Activated CD4-positive, alpha-beta memory T cell treated with anti-CD3 and anti-CD28 coated beads for 36 hours (primary cell): ENCODE measurements at regions of chr6 and their contacts with region 1.

Region 1: GRCh38 chr6:14423330-14423729 is 305.8 kb downstream of the CD83 start:
- DNase-seq: no peak
- H3K4me3 Mint-ChIP-seq: no peak overlapping the region
- H3K27ac Mint-ChIP-seq: peak overlapping the region; percentile 73
- H3K4me1 Mint-ChIP-seq: peaks cover 46% of the 10 kb centered on the region
- H3K27me3 Mint-ChIP-seq: no peaks in the 10 kb centered on the region

Region 2: GRCh38 chr6:14270925-14271791 is 152.2 kb before region 1 on chr6:
- CTCF ChIA-PET with region 1: no interaction called
- POLR2A ChIA-PET with region 1: no interaction called
- intact Hi-C with region 1: loop called (anchors 1 kb)
- DNase-seq: peak; percentile 85
- H3K4me3 Mint-ChIP-seq: no peak overlapping the region
- H3K27ac Mint-ChIP-seq: peak overlapping the region; percentile 57
- H3K4me1 Mint-ChIP-seq: peaks cover 35% of the 10 kb centered on the region
- H3K27me3 Mint-ChIP-seq: no peaks in the 10 kb centered on the region

Region 3: GRCh38 chr6:14542670-14543366 is 119.5 kb after region 1 on chr6:
- CTCF ChIA-PET with region 1: no interaction called
- POLR2A ChIA-PET with region 1: no interaction called
- intact Hi-C with region 1: loop called (anchors 1 kb)
- DNase-seq: peak; percentile 90
- H3K4me3 Mint-ChIP-seq: no peak overlapping the region
- H3K27ac Mint-ChIP-seq: peak overlapping the region; percentile 53
- H3K4me1 Mint-ChIP-seq: peaks cover 31% of the 10 kb centered on the region
- H3K27me3 Mint-ChIP-seq: peaks cover 2% of the 10 kb centered on the region

Region 4: GRCh38 chr6:14665827-14666724 is 242.7 kb after region 1 on chr6:
- CTCF ChIA-PET with region 1: no interaction called
- POLR2A ChIA-PET with region 1: no interaction called
- intact Hi-C with region 1: loop called (anchors 1 kb)
- DNase-seq: peak; percentile 84
- H3K4me3 Mint-ChIP-seq: no peak overlapping the region
- H3K27ac Mint-ChIP-seq: peak overlapping the region; percentile 11
- H3K4me1 Mint-ChIP-seq: peaks cover 25% of the 10 kb centered on the region
- H3K27me3 Mint-ChIP-seq: no peaks in the 10 kb centered on the region

Region 5: GRCh38 chr6:14831937-14832336 is 408.6 kb after region 1 on chr6:
- CTCF ChIA-PET with region 1: no interaction called
- POLR2A ChIA-PET with region 1: no interaction called
- intact Hi-C with region 1: no loop called
- DNase-seq: no peak
- H3K4me3 Mint-ChIP-seq: no peak overlapping the region
- H3K27ac Mint-ChIP-seq: no peak overlapping the region
- H3K4me1 Mint-ChIP-seq: peaks cover 6% of the 10 kb centered on the region
- H3K27me3 Mint-ChIP-seq: no peaks in the 10 kb centered on the region